ENCODE measurements at regions of chr1 and their contacts with region 1.

Region 1: DNA sequence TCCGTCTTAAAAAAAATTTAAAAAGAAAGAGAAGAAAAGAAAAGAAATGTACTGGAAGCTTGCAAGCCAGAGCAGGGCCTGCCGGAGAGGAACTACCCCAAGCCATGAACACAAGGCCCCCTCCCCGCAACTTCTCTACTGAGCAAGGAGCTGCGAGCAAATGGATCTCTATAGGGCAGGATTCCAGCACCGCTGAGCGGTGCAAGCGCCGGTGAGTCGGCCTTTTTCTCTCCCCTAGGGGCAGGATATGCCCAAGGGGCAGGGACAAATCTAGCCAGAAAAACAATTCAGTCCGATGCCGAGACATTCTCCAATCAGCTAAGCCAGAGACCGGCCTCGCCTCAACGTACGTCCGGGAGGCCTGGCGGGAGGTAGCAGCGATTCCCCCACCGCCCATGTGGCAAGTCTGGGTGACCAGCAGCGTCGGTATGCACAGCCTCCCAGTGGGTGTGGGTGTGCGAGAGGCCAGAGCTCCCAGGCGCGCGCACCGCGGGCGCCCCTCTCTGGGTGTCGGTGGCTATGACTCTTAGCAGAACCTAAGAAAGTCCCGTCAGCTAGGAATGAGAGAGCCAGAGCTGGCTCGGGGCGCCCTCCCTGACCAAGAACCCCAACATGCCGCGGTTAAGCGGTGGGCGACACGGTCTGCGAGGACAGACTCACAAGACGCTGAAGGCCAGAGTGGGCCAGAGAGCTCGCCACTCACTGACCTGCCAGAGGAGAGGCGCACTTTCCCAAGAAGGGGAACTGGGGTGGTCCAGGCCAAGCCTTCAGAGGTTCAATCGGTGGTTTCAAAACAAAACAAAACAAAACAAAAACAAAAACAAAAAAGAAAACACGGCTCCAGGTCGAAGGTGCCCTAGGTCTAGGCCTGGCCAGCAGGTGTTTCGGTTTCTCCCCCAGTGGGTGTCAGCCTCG is 1.9 kb downstream of the CSMD2 start:
- DNase-seq: peak; percentile 71 to 91 (median 87)
- H3K4me3 ChIP-seq: peak overlapping the region; percentile 42 to 81 (median 69)
- H3K27ac ChIP-seq: peak overlapping the region in 35 of 59 donors; percentile 12 to 97 (median 71)
- H3K27me3 ChIP-seq: peaks cover 0 to 3% (median 0%) of the 10 kb centered on the region in 45 donors
- CTCF ChIP-seq: peak; percentile 45 to 94 (median 84)

Region 2: DNA sequence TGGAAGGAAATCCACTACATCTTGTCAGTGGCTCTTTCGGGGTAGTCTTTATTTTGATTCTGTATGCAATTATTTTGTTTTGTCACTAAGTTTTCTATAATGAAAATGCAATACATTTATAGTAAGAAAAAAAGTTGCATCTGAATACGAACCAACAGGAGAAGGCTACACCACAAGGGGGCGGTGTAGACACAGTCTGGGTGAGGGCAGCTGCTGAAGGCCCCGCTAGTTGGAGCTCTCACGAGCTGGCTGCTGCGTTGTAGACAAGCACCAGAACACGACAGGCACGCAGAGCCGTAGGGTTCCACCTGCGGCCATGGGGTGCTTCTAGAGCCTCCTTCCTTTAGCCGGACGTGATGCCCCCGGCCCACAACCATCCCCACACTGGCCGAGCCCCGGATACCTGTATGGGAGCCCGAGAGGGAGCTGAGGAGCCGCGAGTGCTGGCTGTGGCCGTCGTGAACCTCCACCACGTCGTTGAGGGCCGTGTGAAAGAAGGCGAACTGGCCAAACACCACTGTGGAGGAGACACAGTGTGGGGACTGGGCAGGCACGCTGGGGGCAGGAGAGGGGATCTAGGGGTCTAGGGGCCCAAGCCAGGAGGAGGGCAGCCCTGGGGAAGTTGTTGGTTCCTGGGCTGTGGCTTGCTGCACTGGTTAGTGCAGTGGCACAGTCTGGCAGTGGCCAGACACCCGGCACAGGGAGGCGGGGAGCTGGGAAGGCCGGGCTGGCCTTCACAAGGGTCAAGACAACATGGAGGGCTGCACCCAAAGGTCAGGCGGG is 529.9 kb before region 1 on chr1:
- intact Hi-C with region 1: loop called (anchors 5 kb)
- DNase-seq: peak; percentile 82 to 96 (median 93)
- H3K4me3 ChIP-seq: peak overlapping the region in 5 of 59 donors; percentile 2 to 44 (median 19)
- H3K27ac ChIP-seq: peak overlapping the region in 4 of 59 donors; percentile 35 to 57 (median 46)
- H3K27me3 ChIP-seq: no peaks in the 10 kb centered on the region
- CTCF ChIP-seq: peak; percentile 93 to 100 (median 98)

Region 3: DNA sequence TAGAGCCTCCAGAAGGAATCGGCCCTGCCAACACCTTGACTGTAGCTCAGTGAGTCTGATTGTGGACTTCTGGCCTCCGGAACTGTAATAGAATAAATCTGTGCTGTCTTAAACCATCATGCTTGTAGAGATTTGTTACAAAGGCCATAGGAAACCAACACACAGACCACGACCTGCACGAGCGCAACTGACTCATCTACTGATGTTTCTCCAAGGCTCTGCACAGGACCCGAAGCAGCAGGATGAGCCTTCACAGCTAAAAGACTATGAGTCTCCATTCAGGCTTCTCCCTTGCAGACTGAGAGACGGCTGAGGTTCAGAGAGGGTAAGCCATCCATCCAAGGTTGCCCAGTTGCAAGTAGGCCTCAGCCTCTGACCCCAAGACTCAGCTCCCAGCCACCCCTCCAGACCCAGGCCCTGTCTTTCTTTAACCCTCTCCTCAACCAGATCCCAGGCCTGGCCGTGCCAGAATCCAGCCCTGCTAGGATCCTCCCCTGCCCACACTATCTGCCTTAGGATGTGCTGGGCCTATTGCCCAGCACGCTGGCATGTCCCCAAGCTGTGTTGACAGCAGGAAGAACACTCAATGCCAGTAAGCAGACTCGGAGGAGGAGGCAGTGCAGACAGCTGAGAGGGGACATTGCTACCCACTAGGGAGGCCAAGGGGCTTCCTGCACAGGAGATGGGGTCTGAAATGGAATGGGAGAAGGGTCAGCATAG is 190.3 kb before region 1 on chr1:
- intact Hi-C with region 1: loop called (anchors 5 kb)
- DNase-seq: peak; percentile 71 to 89 (median 86)
- H3K4me3 ChIP-seq: peak overlapping the region in 7 of 59 donors; percentile 1 to 33 (median 27)
- H3K27ac ChIP-seq: peak overlapping the region in 58 of 59 donors; percentile 7 to 90 (median 74)
- H3K27me3 ChIP-seq: no peaks in the 10 kb centered on the region
- CTCF ChIP-seq: peak in 1 of 56 donors; percentile 11

Region 4: GRCh38 chr1:34066981-34067603 is 96.0 kb before region 1 on chr1:
- intact Hi-C with region 1: loop called in 1 of 2 experiments (anchors 10 kb)
- DNase-seq: no peak
- H3K4me3 ChIP-seq: no peak overlapping the region
- H3K27ac ChIP-seq: peak overlapping the region in 14 of 59 donors; percentile 0 to 51 (median 24)
- H3K27me3 ChIP-seq: no peaks in the 10 kb centered on the region
- CTCF ChIP-seq: peak in 3 of 56 donors; percentile 15 to 16 (median 15)

Region 5: GRCh38 chr1:34597877-34598514 is 434.9 kb after region 1 on chr1:
- intact Hi-C with region 1: loop called (anchors 5 kb)
- DNase-seq: peak; percentile 53 to 94 (median 87)
- H3K4me3 ChIP-seq: no peak overlapping the region
- H3K27ac ChIP-seq: no peak overlapping the region
- H3K27me3 ChIP-seq: peaks cover 0 to 7% (median 0%) of the 10 kb centered on the region in 45 donors
- CTCF ChIP-seq: peak; percentile 53 to 93 (median 87)

Measured in dorsolateral prefrontal cortex (tissue), 120 donors.